CD8-positive, alpha-beta T cell (primary cell): ENCODE measurements at regions of chr22 and their contacts with region 1.

Region 1: GRCh38 chr22:39750759-39751158 is 142.8 kb downstream of the ENTHD1 start:
- DNase-seq: no peak
- ATAC-seq: no peak
- H3K4me3 ChIP-seq: no peak overlapping the region
- H3K4me3 Mint-ChIP-seq: no peak overlapping the region
- H3K27ac ChIP-seq: no peak overlapping the region
- H3K27ac Mint-ChIP-seq: no peak overlapping the region
- H3K4me1 ChIP-seq: peaks cover 10% of the 10 kb centered on the region
- H3K4me1 Mint-ChIP-seq: peaks cover 19% of the 10 kb centered on the region
- H3K27me3 ChIP-seq: no peaks in the 10 kb centered on the region
- H3K27me3 Mint-ChIP-seq: no peaks in the 10 kb centered on the region
- CTCF ChIP-seq: no peak

Region 2: DNA sequence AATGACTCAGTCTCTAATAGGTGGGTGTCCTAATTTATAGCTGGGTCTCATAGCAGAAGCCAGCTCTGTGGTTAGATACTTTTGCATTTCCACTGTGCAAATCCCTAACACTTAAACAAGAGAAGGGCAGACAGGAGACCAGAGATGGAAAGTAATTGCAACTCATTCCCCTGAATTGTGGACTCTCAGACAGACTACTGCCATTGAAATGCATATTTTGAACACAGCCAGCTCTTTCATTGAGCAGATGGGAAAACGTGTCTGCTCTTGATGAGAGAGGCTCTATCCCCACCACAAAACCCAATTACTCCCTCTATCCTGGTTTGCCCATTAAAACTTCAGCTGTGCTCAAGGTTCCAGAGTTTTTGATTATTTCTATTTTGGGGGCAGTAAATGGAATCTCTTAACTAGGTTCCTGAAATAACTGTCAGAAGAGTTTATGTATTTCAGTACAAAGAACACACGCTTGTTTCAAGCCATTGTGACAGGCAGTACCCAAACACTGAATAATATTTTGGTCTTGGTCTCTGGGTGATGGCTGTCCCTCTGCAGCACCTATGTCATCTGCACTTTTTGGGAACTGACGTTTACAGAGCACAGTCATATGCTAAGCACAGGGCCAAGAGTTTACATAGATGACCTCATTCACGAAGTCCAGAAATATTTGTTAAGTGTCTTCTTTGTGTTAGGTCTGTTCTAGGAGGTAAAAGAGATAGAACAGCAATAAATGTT is 1136.3 kb before region 1 on chr22:
- CTCF ChIA-PET with region 1: no interaction called
- POLR2A ChIA-PET with region 1: no interaction called
- intact Hi-C with region 1: no loop called
- DNase-seq: no peak
- ATAC-seq: no peak
- H3K4me3 ChIP-seq: no peak overlapping the region
- H3K4me3 Mint-ChIP-seq: no peak overlapping the region
- H3K27ac ChIP-seq: no peak overlapping the region
- H3K27ac Mint-ChIP-seq: no peak overlapping the region
- H3K4me1 ChIP-seq: no peaks in the 10 kb centered on the region
- H3K4me1 Mint-ChIP-seq: no peaks in the 10 kb centered on the region
- H3K27me3 ChIP-seq: no peaks in the 10 kb centered on the region
- H3K27me3 Mint-ChIP-seq: peaks cover 9% of the 10 kb centered on the region
- CTCF ChIP-seq: no peak

Region 3: DNA sequence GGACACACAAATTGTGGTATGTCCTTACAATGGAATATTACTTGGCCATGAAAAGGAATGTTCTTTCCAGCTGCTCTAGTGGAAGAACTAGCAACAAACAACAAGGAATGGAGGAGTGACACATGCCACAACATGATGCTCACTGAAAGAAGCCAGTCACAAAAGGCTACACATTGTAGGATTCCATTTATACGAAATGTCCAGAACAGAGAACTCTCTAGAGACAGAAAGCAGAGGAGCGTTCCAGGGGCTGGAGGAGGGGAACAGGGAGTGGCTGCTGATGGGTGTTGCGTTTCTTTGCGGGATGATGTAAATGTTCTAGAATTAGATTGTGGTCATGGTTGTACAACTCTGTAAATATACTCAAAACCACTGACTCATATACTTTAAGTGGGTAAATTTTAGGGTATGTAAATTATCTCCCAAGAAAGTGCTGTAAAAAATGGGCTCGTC is 473.6 kb before region 1 on chr22:
- CTCF ChIA-PET with region 1: no interaction called
- POLR2A ChIA-PET with region 1: no interaction called
- intact Hi-C with region 1: loop called in 1 of 2 experiments (anchors 5 kb)
- DNase-seq: no peak
- ATAC-seq: no peak
- H3K4me3 ChIP-seq: no peak overlapping the region
- H3K4me3 Mint-ChIP-seq: no peak overlapping the region
- H3K27ac ChIP-seq: no peak overlapping the region
- H3K27ac Mint-ChIP-seq: no peak overlapping the region
- H3K4me1 ChIP-seq: no peaks in the 10 kb centered on the region
- H3K4me1 Mint-ChIP-seq: no peaks in the 10 kb centered on the region
- H3K27me3 ChIP-seq: no peaks in the 10 kb centered on the region
- H3K27me3 Mint-ChIP-seq: peaks cover 8% of the 10 kb centered on the region
- CTCF ChIP-seq: no peak